ENCODE measurements at regions of chr1 and their contacts with region 1.

Region 1: DNA sequence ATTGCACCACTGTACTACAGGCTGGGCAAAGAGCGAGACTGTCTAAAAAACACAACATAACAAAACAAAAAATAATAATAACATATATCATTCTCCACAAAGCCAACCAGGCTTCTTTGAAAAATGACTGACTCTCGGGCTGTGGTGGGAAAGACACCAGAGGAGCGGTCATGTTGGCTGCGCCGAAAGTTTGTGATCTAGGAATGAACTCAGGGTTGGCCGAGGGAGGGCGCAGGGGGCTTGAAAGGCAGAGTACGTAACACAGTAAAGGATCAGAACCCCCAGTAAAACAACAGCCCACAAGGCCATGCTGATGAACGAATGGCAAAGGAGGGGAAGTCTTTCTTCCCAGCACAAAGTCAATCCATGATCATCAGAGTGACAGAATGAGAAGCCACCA is 4.7 kb downstream of the SLC35E2B start:
- DNase-seq: peak in 2 of 4 experiments; percentile 5 to 6
- ATAC-seq: no peak
- H3K4me3 ChIP-seq: no peak overlapping the region
- H3K27ac ChIP-seq: no peak overlapping the region
- H3K4me1 ChIP-seq: peaks cover 0 to 24% of the 10 kb centered on the region in 2 experiments; a peak in 3 of 5 replicates
- H3K27me3 ChIP-seq: no peaks in the 10 kb centered on the region
- CTCF ChIP-seq: no peak
- EP300 ChIP-seq: no peak
- POLR2A ChIP-seq: no peak
- RAD21 ChIP-seq: no peak

Region 2: DNA sequence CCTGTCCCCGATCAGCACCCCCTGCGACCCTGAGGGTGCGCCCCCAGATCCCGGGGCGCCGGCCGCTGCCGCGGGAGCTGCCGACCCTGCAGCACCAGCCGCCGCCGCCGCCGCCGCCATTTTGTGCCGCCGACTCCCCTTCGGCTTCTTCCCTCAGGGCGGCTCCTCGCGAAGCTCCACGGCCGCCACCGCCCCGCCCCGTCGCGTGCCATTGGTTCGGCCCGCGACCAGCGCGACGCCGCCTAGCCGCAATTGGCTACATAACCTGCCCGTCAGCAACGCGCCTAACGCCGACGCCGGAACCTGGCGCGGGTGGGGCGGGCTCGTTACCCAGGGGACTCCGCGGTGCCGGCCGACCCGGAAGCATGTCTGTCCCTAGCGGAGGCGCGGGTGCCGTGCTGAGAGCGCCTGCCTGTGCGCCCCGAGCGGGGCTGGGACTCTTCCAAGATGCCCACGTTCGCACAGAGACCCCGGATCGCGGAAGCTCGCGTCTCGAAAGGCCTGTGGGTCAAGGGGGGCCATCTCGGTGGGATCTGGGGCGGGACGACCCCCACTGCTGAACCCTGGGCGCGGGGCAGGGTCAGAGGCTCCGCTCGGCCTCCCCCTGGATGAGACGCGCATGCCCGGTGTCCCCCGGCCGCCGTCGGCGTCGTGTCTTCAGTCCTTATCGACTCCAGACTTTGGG is 288.5 kb before region 1 on chr1 and contains the start of gene CCNL2:
- CTCF ChIA-PET with region 1: no interaction called
- POLR2A ChIA-PET with region 1: no interaction called
- in situ Hi-C with region 1: no loop called
- intact Hi-C with region 1: no loop called
- DNase-seq: peak; percentile 96 to 100 (median 98)
- ATAC-seq: peak; percentile 96
- H3K4me3 ChIP-seq: peak within 1 kb of the TSS; percentile 100
- H3K27ac ChIP-seq: peak within 1 kb of the TSS; percentile 98
- H3K4me1 ChIP-seq: peaks cover 19 to 46% of the 10 kb centered on the region in 2 experiments
- H3K27me3 ChIP-seq: no peaks in the 10 kb centered on the region
- CTCF ChIP-seq: peak; percentile 67 to 76 (median 71)
- EP300 ChIP-seq: peak; percentile 34; the same call in 1 of the 2 replicates
- POLR2A ChIP-seq: peak; percentile 92
- RAD21 ChIP-seq: no peak; a peak in 2 of 4 replicates
- polyA plus RNA-seq, gene CCNL2: 2.8 to 5.6 TPM

Region 3: DNA sequence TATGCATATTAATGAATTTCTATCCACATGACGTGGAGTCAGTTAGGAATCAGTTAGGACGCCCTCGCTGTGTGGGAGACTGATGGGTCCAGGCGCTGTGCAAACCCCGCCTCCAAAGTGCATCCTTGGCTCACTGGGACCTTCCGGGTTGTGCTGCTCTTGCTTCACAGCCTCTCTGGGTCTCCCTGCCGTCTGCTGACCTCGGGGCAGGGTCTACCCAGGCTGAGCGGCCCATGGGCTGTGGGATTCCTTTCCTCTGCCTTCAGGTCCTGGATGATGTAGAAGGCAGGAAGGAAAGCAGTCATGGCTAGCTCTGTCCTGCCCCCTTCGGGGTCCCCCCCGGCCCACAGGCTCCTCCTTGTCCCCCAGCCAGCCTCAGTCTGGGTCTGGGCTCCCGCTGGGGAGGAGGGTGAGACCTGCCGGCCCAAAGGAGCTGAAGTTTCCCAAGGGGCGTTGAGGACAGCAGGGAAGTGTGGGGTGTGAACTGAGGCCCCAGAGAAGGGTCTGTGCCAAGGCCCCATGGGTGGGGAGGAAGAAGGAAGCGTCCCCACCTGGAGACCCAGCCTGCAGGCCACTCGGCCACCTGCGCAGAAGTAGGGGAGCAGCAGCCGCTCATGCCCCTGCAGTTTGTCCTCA is 61.0 kb after region 1 on chr1:
- CTCF ChIA-PET with region 1: no interaction called
- POLR2A ChIA-PET with region 1: no interaction called
- in situ Hi-C with region 1: loop called (anchors 5 kb)
- intact Hi-C with region 1: no loop called
- DNase-seq: peak; percentile 43 to 66 (median 48)
- ATAC-seq: no peak
- H3K4me3 ChIP-seq: no peak overlapping the region
- H3K27ac ChIP-seq: no peak overlapping the region; the same call in 2 of the 3 replicates
- H3K4me1 ChIP-seq: peaks cover 6 to 24% of the 10 kb centered on the region in 2 experiments; a peak in 3 of 5 replicates
- H3K27me3 ChIP-seq: no peaks in the 10 kb centered on the region
- CTCF ChIP-seq: no peak
- EP300 ChIP-seq: no peak
- POLR2A ChIP-seq: no peak
- RAD21 ChIP-seq: no peak

Region 4: DNA sequence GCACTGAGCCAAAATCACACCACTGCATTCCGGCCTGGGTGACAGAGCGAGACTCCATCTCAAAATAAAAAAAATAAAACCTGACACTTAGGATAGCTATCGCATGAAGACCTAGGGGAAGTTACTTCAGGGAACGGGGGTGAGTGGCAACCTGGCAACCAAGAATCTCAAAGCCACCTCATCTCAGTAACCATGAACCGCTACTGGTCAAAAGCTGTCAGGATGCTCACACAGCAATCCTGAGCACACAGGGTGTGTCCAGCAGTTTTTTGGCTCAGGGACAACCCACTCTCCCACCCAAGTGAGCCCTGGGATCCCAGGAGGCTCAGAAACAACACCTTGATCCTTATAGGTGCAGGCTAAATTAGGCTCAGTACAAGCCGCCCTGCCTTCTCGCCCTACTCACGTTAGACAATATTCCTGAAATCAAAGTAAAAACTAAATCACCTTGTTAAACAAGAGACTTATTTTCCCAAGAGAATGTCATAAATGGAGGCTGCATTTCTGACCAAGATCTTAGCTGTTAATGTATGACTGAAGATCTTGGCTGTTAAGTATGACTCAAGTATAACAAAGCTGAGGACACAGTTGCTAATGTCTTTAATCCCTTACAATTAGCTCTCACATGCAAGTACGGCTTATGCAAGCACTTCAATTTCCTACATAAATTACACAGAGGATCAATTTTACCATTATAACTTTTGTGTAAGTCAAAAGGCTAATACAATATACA is 138.7 kb after region 1 on chr1:
- CTCF ChIA-PET with region 1: no interaction called
- POLR2A ChIA-PET with region 1: no interaction called
- in situ Hi-C with region 1: no loop called
- intact Hi-C with region 1: no loop called
- DNase-seq: no peak
- ATAC-seq: no peak
- H3K4me3 ChIP-seq: no peak overlapping the region
- H3K27ac ChIP-seq: no peak overlapping the region
- H3K4me1 ChIP-seq: no peaks in the 10 kb centered on the region
- H3K27me3 ChIP-seq: no peaks in the 10 kb centered on the region
- CTCF ChIP-seq: no peak
- EP300 ChIP-seq: no peak
- POLR2A ChIP-seq: no peak
- RAD21 ChIP-seq: no peak